Cardiac septum (tissue), 1 donor: ENCODE measurements at regions of chr11 and their contacts with region 1.

Region 1: GRCh38 chr11:112289588-112290492 is 29.2 kb upstream of the PLET1 start:
- DNase-seq: peak; percentile 94

Region 2: GRCh38 chr11:112588252-112588694 is 298.4 kb after region 1 on chr11:
- intact Hi-C with region 1: loop called (anchors 5 kb)
- DNase-seq: no peak

Region 3: GRCh38 chr11:112784323-112785073 is 494.7 kb after region 1 on chr11:
- intact Hi-C with region 1: loop called (anchors 10 kb)
- DNase-seq: peak; percentile 89

Region 4: GRCh38 chr11:112961146-112961668 is 671.4 kb after region 1 on chr11 and contains the start of gene NCAM1:
- intact Hi-C with region 1: loop called (anchors 10 kb)
- DNase-seq: peak; percentile 90
- total RNA-seq, gene NCAM1: 472 TPM

Region 5: GRCh38 chr11:113289431-113290187 is 999.8 kb after region 1 on chr11:
- intact Hi-C with region 1: loop called (anchors 2 kb)
- DNase-seq: peak; percentile 83